HepG2 (cell line): ENCODE measurements at regions of chr21 and their contacts with region 1.

Region 1: GRCh38 chr21:32770871-32771523 is 558 bp downstream of the PAXBP1 start:
- DNase-seq: peak; percentile 33
- ATAC-seq: peak; percentile 79
- H3K4me3 ChIP-seq: peak overlapping the region; percentile 75 to 92 (median 90)
- H3K27ac ChIP-seq: peak overlapping the region; percentile 91
- H3K4me1 ChIP-seq: peaks cover 52% of the 10 kb centered on the region
- H3K27me3 ChIP-seq: no peaks in the 10 kb centered on the region; a peak in 1 of 5 replicates
- CTCF ChIP-seq: no peak
- EP300 ChIP-seq: no peak
- POLR2A ChIP-seq: no peak; a peak in 1 of 4 replicates
- RAD21 ChIP-seq: no peak

Region 2: DNA sequence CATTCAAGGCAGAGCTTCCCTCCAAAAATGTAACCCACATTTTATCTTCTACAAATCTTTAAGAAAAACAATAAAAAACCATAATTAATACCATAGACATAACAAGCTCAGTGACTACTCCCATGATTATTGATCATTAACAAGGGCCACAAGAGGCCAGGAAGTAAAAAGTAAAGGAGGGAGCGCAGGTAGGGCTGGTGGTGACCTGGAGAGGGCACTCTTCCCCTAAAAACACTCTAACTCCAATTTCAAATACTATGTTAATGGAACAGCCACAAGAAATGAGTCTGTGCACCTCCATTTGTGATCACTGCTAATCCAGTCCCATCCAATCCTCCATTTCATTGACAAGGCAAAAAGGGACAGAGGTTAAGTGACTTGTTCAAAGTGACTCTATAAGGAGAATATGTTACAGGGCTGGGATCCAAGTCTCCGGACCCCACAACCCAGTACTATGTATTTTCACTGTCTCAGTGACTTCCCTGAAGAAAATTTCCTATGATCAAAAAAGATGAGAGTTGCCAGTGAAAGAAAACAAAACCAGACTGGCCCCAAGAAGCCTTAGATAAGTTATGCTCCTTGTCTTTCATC is 117.6 kb before region 1 on chr21:
- CTCF ChIA-PET with region 1: no interaction called
- POLR2A ChIA-PET with region 1: no interaction called
- in situ Hi-C with region 1: no loop called
- intact Hi-C with region 1: loop called (anchors 5 kb)
- DNase-seq: peak; percentile 37
- ATAC-seq: peak; percentile 95
- H3K4me3 ChIP-seq: no peak overlapping the region
- H3K27ac ChIP-seq: no peak overlapping the region
- H3K4me1 ChIP-seq: peaks cover 9% of the 10 kb centered on the region
- H3K27me3 ChIP-seq: no peaks in the 10 kb centered on the region
- CTCF ChIP-seq: peak; percentile 83
- EP300 ChIP-seq: no peak
- POLR2A ChIP-seq: no peak
- RAD21 ChIP-seq: peak; percentile 59; the same call in 1 of the 2 replicates

Region 3: DNA sequence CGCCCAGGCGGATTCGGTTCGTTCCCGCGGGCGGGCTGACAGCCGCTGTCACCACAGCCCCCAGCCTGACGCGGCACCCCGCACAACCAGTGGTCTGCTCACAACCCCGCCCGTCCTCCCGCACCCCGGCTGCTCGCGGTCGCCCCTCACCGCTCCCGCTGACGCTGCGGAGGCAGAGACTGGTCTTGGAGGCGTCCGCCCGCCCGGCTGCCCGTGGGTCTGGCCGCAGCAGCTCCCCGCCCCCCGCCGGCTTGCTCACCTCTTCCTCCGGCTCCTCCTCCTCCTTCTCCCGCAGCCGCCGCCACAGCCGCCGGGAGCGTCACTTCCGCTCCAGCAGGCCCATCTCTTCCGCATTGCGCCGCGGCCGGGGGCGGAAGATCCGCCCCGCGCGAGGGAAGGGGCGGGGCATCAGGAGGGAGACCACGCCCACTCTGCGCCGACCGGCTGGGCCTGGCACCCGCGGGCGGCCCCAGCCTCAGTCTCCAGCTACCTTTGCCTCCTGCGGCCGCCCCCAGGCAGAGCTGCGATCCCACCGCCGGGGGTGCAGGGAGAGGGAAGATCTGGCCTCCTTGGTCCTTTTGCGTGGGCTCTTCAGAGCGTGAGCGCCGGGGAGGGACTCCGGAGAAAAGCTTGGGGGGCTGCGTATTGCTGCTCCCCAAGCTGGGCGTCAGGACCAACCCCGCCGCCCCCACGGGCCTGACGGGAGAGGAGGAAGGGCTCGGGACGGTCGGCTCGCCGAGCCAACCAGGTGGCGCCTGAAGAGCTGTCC is 43.1 kb before region 1 on chr21 and contains the start of gene SYNJ1:
- CTCF ChIA-PET with region 1: no interaction called
- POLR2A ChIA-PET with region 1: interaction called, 31 read pairs
- in situ Hi-C with region 1: loop called (anchors 5 kb)
- intact Hi-C with region 1: loop called (anchors 5 kb)
- DNase-seq: peak; percentile 87
- ATAC-seq: peak; percentile 92
- H3K4me3 ChIP-seq: peak within 1 kb of the TSS; percentile 76 to 94 (median 91)
- H3K27ac ChIP-seq: peak within 1 kb of the TSS; percentile 84
- H3K4me1 ChIP-seq: peaks cover 15% of the 10 kb centered on the region; the same call in 1 of the 2 replicates
- H3K27me3 ChIP-seq: no peaks in the 10 kb centered on the region; a peak in 1 of 5 replicates
- CTCF ChIP-seq: peak; percentile 27; the same call in 1 of the 2 replicates
- EP300 ChIP-seq: no peak
- POLR2A ChIP-seq: peak; percentile 48 to 82; a peak in 2 of 4 replicates
- RAD21 ChIP-seq: peak; percentile 45
- total RNA-seq, gene SYNJ1: 2.7 and 6.4 TPM in 2 replicates

Region 4: DNA sequence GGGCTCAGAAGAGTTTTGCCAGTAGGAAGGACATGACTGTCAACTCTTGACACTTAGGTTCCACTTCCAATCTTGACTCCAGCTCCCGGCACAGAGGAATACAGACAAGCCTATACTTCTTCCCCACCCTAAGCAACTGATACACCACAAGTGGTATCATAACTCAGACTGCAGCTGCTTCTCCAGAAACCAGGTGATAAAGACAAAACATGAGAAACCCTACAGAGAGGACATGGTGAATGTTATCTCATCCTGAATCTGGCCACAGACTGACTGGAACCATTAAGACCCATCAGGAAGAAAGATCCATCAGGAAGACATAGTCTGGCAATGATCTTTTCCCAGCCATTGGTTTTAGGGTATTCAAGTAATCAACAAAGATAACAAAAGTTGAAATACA is 13.2 kb before region 1 on chr21:
- CTCF ChIA-PET with region 1: no interaction called
- POLR2A ChIA-PET with region 1: interaction called, 14 read pairs
- in situ Hi-C with region 1: no loop called
- intact Hi-C with region 1: no loop called
- DNase-seq: no peak
- ATAC-seq: no peak
- H3K4me3 ChIP-seq: no peak overlapping the region
- H3K27ac ChIP-seq: no peak overlapping the region
- H3K4me1 ChIP-seq: no peaks in the 10 kb centered on the region
- H3K27me3 ChIP-seq: no peaks in the 10 kb centered on the region
- CTCF ChIP-seq: no peak
- EP300 ChIP-seq: no peak
- POLR2A ChIP-seq: no peak
- RAD21 ChIP-seq: no peak

Region 5: DNA sequence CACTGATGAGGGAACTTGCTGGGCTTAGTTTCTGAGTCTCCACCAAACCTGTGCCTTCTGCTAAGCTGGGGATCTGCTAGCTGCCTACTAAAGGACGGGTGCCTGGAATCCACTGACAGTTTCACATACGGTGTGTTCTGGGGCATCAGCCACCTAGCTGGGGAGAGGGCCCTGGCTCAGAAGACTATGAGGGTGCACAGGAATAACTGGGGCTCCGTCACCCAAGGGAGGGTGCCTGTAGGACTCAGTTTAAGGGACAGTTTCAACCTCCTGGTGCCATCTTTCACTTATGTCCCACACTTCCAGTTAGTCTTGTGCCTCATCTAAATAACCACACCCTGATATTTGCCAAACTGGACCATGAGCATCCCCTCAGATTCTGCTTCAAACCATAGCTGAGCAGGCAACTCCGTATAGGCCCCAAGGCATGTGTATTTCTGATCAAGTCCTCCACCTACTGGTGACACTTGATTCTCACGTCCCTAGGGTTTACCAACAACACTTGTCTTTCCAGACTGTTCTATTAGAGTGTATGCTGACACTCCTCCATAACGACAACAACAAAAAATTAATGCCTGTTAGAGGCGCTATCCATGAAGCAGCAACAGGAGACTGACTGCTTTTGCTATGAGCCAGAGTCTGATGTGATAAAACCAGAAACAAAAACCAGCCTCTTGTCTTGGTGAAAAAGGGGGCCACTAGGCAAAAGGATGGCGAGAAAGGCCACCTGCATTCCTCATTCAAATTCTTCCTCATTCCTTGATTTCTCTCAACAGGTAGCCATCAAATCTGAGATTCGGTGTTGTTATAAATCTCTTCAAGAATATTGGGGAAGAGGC is 55.6 kb after region 1 on chr21:
- CTCF ChIA-PET with region 1: no interaction called
- POLR2A ChIA-PET with region 1: no interaction called
- in situ Hi-C with region 1: no loop called
- intact Hi-C with region 1: loop called (anchors 5 kb)
- DNase-seq: peak; percentile 54
- ATAC-seq: peak; percentile 99
- H3K4me3 ChIP-seq: no peak overlapping the region
- H3K27ac ChIP-seq: no peak overlapping the region
- H3K4me1 ChIP-seq: no peaks in the 10 kb centered on the region
- H3K27me3 ChIP-seq: no peaks in the 10 kb centered on the region
- CTCF ChIP-seq: peak; percentile 85
- EP300 ChIP-seq: no peak
- POLR2A ChIP-seq: no peak
- RAD21 ChIP-seq: peak; percentile 34; the same call in 1 of the 2 replicates